ENCODE measurements at regions of chr18 and their contacts with region 1.

Region 1: GRCh38 chr18:55856229-55856628 is 268.2 kb upstream of the TCF4 start:
- DNase-seq: peak; percentile 99
- ATAC-seq: peak; percentile 95
- H3K4me3 ChIP-seq: peak overlapping the region; percentile 23; the same call in 1 of the 2 replicates
- H3K27ac ChIP-seq: peak overlapping the region; percentile 72
- H3K4me1 ChIP-seq: peaks cover 37% of the 10 kb centered on the region
- H3K27me3 ChIP-seq: no peaks in the 10 kb centered on the region
- CTCF ChIP-seq: no peak

Region 2: DNA sequence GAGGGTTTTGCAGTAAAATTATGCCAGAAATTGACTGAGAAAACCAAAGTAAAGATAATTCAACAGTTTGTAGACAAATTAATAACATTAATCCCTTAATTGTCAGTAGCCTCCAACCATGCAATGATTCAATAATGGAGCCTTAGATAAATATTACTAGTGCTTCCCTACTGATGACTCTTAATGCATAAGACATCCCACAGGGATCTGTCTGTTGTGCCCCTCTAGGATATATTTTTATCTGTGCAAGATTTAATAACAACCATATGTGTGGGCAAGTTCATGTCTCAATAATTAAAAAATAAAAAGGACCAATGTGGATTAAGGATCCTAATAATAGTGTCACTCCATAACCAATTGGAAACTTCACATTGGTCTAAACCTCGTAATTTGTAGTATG is 37.9 kb before region 1 on chr18:
- CTCF ChIA-PET with region 1: no interaction called
- POLR2A ChIA-PET with region 1: no interaction called
- intact Hi-C with region 1: loop called (anchors 5 kb)
- DNase-seq: no peak
- ATAC-seq: no peak
- H3K4me3 ChIP-seq: no peak overlapping the region
- H3K27ac ChIP-seq: no peak overlapping the region
- H3K4me1 ChIP-seq: peaks cover 32% of the 10 kb centered on the region
- H3K27me3 ChIP-seq: no peaks in the 10 kb centered on the region
- CTCF ChIP-seq: no peak

Region 3: DNA sequence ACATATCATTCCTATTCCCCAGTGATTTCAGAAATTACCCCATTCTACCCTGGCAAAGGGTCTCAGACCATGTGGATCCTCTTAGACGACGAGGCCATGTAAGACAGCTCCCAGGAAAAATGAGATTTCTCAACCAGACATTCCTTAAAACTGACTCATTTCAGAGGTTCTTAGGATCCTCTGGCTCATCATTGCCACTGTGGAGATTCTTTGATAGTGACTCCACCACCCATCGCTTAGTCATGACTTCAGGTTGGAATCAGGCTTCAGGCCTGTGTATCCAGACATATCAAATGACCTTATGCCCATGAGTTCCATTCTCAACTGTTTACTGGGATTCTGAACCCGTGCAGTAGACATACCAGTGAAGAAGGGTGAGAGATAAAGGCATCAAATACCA is 22.7 kb before region 1 on chr18:
- CTCF ChIA-PET with region 1: no interaction called
- POLR2A ChIA-PET with region 1: no interaction called
- intact Hi-C with region 1: loop called (anchors 1 kb)
- DNase-seq: peak; percentile 98
- ATAC-seq: peak; percentile 100
- H3K4me3 ChIP-seq: no peak overlapping the region
- H3K27ac ChIP-seq: peak overlapping the region; percentile 50
- H3K4me1 ChIP-seq: peaks cover 10% of the 10 kb centered on the region
- H3K27me3 ChIP-seq: no peaks in the 10 kb centered on the region
- CTCF ChIP-seq: no peak

Region 4: DNA sequence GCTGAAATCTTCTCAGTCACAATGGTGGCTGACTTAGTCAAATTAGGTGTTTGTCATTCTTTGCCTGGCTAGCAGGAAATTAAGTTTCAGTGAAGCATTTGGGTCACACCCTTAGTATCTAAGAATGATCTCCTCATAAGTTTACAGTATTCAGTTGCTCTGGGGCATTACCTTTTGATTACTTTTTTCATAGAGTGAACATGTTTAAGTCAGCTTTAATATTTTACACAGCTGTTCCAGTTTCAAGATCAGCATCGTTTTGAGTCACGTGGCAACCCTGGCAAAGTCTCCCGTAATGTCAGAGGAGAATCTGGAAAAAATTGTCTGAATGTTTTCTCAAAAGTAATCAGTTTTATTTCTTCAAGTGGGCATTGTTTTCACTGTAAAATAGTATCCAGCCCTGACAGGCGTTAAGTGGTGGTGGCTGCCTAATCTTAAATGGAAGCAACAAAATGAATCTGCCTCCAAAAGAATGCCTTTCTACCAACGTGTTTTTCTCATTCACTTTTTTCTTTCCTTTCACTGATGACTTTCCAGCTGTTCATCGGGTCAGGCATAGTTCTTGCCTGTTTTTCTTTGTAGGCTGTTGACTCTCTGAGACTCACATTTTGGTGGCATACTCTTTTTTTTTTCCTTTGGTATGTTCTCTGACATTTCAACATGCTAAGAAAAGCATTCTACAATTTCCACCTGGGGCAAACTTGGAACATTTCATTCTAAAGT is 51.4 kb after region 1 on chr18:
- CTCF ChIA-PET with region 1: no interaction called
- POLR2A ChIA-PET with region 1: no interaction called
- intact Hi-C with region 1: no loop called
- DNase-seq: peak; percentile 6
- ATAC-seq: peak; percentile 37; the same call in 1 of the 2 replicates
- H3K4me3 ChIP-seq: no peak overlapping the region
- H3K27ac ChIP-seq: no peak overlapping the region
- H3K4me1 ChIP-seq: peaks cover 3% of the 10 kb centered on the region; the same call in 1 of the 2 replicates
- H3K27me3 ChIP-seq: no peaks in the 10 kb centered on the region
- CTCF ChIP-seq: no peak

Region 5: DNA sequence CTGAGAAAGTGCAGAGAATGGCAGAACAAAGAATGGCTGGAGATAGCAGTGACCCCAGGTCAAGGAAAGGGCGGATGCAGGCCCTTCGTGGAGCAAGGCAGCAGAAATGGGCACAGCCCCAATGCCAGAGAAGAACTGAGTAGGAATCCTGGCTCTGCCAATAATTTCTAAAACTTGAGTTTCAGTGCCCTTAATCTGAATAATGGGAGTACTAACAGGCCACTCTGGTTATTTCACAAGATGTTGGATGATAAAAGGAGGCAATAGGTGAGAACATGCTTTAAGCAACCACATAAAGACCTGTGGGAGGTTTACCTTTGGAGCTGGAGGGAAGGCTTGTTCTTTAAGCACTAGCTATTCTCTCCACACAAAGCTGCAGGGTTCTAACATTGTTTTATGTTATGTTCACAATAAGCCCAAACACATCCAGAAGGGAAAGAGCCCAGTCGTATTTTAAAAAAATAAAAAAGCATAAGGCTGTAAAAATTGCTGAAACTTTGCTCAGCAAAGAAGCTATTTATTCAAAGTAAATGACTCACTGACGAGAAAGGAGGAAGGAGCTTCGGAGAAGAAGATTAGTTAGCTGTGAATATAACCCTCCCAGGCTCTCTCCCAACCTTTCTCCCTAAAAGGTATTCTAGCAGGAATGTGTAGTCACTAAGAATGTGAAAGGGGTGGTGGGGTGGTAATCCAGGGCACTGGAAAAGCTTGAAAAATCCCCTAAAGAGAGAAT is 312.0 kb after region 1 on chr18:
- CTCF ChIA-PET with region 1: no interaction called
- POLR2A ChIA-PET with region 1: no interaction called
- intact Hi-C with region 1: loop called (anchors 10 kb)
- DNase-seq: peak; percentile 92
- ATAC-seq: peak; percentile 93
- H3K4me3 ChIP-seq: peak overlapping the region; percentile 39; the same call in 1 of the 2 replicates
- H3K27ac ChIP-seq: peak overlapping the region; percentile 93
- H3K4me1 ChIP-seq: peaks cover 40% of the 10 kb centered on the region
- H3K27me3 ChIP-seq: no peaks in the 10 kb centered on the region
- CTCF ChIP-seq: no peak

Measured in PC-3 (cell line).